ENCODE measurements at regions of chr5 and their contacts with region 1.

Region 1: DNA sequence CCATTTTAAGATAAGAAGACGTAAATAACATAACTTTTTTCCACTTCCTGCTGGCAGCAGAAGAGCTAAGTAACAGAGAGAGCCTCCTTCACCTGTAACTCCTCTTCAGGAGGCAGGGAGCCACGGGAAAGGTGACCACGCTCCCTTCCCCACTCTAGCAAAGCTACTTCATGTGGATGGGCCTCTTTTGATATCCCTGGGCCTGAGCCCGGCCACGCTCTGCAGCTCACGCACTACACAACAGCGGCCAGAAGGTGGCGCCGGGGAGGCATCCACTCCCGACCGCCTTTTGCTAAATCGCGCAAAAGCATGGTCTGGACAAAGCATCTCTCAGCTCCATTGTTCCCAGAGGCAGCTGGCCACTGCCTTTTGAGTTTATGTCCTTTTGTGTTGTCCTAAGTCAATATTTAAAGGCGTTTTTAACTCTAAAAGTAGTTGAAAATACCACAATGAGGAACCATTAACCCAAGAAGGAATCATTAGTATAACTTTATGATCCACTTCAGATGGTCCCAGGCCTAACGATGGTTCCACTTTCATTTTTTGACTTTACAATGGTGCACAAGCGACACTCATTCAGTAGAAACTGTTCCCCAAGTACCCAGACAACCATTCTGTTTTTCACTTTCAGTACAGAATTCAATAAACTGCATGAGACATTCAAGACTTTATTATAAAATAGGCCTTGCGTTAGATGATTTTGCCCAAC is 23.6 kb downstream of the CMBL start:
- DNase-seq: peak; percentile 87 to 92 (median 91)
- H3K4me3 ChIP-seq: no peak overlapping the region
- H3K27ac ChIP-seq: no peak overlapping the region
- H3K4me1 ChIP-seq: peaks cover 0 to 10% (median 10%) of the 10 kb centered on the region in 3 donors
- H3K27me3 ChIP-seq: no peaks in the 10 kb centered on the region
- CTCF ChIP-seq: peak; percentile 88

Region 2: DNA sequence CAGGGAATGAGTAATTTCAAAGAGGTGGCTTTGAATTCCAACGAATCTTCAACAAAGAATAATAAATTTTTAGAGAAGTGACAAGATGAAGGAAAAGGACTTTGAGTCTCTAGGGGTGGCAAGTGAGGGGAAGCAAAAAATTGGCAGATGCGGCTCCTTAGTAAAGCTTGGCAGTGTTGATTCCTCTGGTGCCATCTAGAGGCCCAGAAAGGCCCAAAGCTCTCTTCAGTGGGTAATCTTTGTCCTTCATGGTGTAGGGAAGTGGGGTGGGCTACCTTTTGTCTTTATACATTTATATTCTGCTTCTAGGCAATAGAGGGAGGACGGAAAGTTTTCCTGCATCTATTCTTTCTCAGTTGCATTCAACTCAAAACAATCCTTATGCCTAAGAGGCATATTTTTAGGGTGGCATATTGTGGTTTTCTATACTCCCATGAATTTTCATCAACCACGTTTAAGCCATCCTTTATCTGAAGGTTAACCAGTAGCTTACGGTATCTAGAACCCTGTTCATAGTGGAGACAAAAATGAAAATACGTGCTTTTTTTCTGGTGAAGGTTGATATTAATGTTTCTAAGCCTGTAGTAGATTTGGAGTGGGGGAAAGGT is 140.1 kb after region 1 on chr5:
- intact Hi-C with region 1: loop called (anchors 10 kb)
- DNase-seq: peak in 3 of 5 donors; percentile 18 to 64 (median 48)
- H3K4me3 ChIP-seq: no peak overlapping the region
- H3K27ac ChIP-seq: no peak overlapping the region
- H3K4me1 ChIP-seq: peaks cover 0 to 6% (median 0%) of the 10 kb centered on the region in 3 donors
- H3K27me3 ChIP-seq: no peaks in the 10 kb centered on the region
- CTCF ChIP-seq: peak; percentile 36